GM12878 (cell line): ENCODE measurements at regions of chr4 and their contacts with region 1.

Region 1: DNA sequence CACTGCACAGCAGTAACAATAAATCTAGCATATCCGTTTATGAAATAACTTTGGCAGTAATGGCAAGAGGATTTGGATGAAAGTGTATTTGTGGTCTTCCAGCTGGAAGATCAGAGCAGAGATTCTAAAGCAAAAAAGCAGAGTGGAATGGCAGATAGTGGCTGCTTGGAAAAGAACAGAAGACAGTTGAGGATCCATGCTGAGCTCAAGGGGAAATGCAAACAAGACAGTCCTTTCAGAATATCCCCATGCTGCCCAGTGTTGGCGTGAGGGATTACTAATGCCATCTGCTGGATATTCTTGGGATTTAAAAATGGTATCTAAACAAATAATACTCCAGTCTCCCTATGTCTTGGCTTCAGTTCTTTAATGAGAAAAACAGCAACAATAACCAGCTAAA is 629.1 kb upstream of the ATOH1 start:
- DNase-seq: no peak
- ATAC-seq: peak; percentile 77
- H3K4me3 ChIP-seq: no peak overlapping the region
- H3K27ac ChIP-seq: no peak overlapping the region
- H3K4me1 ChIP-seq: no peaks in the 10 kb centered on the region
- H3K27me3 ChIP-seq: no peaks in the 10 kb centered on the region
- CTCF ChIP-seq: peak; percentile 18 to 39 (median 29); a peak in 4 of 6 replicates
- EP300 ChIP-seq: no peak
- POLR2A ChIP-seq: no peak
- RAD21 ChIP-seq: peak; percentile 57

Region 2: DNA sequence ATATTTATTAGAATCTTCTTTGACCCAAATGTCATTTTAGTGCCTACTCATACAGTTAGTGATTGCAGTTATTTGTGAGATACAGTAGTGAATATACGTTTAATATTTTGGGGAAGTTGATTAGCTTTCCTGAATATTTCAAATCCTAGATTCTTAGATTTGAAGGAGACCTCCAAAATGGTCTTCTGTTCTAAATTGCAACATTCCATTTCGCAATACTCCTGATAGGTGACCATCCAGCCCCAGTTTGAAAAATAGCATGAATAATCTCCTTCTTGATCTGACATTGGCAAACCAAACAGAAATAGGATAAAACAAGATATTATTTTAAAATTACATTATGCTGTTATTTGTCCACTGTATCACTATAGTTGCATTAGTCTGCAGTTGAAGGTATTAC is 390.1 kb before region 1 on chr4:
- CTCF ChIA-PET with region 1: no interaction called
- POLR2A ChIA-PET with region 1: no interaction called
- RAD21 ChIA-PET with region 1: no interaction called
- SMC1A ChIA-PET with region 1: no interaction called
- in situ Hi-C with region 1: no loop called
- intact Hi-C with region 1: no loop called
- DNase-seq: no peak
- ATAC-seq: no peak
- H3K4me3 ChIP-seq: no peak overlapping the region
- H3K27ac ChIP-seq: no peak overlapping the region
- H3K4me1 ChIP-seq: no peaks in the 10 kb centered on the region
- H3K27me3 ChIP-seq: no peaks in the 10 kb centered on the region
- CTCF ChIP-seq: no peak
- EP300 ChIP-seq: no peak
- POLR2A ChIP-seq: no peak
- RAD21 ChIP-seq: no peak

Region 3: GRCh38 chr4:93157994-93158393 is 41.5 kb before region 1 on chr4:
- CTCF ChIA-PET with region 1: interaction called, 11 read pairs
- POLR2A ChIA-PET with region 1: no interaction called
- RAD21 ChIA-PET with region 1: no interaction called
- SMC1A ChIA-PET with region 1: interaction called, 4 read pairs
- in situ Hi-C with region 1: no loop called
- intact Hi-C with region 1: no loop called
- DNase-seq: no peak
- ATAC-seq: no peak
- H3K4me3 ChIP-seq: no peak overlapping the region
- H3K27ac ChIP-seq: no peak overlapping the region
- H3K4me1 ChIP-seq: no peaks in the 10 kb centered on the region
- H3K27me3 ChIP-seq: no peaks in the 10 kb centered on the region
- CTCF ChIP-seq: peak in 2 of 3 experiments; percentile 17 to 50; a peak in 2 of 6 replicates
- EP300 ChIP-seq: no peak
- POLR2A ChIP-seq: no peak
- RAD21 ChIP-seq: peak; percentile 43; the same call in 1 of the 2 replicates

Region 4: GRCh38 chr4:93532234-93532633 is 332.7 kb after region 1 on chr4:
- CTCF ChIA-PET with region 1: no interaction called
- POLR2A ChIA-PET with region 1: no interaction called
- RAD21 ChIA-PET with region 1: no interaction called
- SMC1A ChIA-PET with region 1: no interaction called
- in situ Hi-C with region 1: no loop called
- intact Hi-C with region 1: no loop called
- DNase-seq: no peak
- ATAC-seq: no peak
- H3K4me3 ChIP-seq: no peak overlapping the region
- H3K27ac ChIP-seq: no peak overlapping the region
- H3K4me1 ChIP-seq: no peaks in the 10 kb centered on the region
- H3K27me3 ChIP-seq: no peaks in the 10 kb centered on the region
- CTCF ChIP-seq: no peak
- EP300 ChIP-seq: no peak
- POLR2A ChIP-seq: no peak
- RAD21 ChIP-seq: no peak